CD4-positive, alpha-beta memory T cell (primary cell): ENCODE measurements at regions of chr11 and their contacts with region 1.

Region 1: DNA sequence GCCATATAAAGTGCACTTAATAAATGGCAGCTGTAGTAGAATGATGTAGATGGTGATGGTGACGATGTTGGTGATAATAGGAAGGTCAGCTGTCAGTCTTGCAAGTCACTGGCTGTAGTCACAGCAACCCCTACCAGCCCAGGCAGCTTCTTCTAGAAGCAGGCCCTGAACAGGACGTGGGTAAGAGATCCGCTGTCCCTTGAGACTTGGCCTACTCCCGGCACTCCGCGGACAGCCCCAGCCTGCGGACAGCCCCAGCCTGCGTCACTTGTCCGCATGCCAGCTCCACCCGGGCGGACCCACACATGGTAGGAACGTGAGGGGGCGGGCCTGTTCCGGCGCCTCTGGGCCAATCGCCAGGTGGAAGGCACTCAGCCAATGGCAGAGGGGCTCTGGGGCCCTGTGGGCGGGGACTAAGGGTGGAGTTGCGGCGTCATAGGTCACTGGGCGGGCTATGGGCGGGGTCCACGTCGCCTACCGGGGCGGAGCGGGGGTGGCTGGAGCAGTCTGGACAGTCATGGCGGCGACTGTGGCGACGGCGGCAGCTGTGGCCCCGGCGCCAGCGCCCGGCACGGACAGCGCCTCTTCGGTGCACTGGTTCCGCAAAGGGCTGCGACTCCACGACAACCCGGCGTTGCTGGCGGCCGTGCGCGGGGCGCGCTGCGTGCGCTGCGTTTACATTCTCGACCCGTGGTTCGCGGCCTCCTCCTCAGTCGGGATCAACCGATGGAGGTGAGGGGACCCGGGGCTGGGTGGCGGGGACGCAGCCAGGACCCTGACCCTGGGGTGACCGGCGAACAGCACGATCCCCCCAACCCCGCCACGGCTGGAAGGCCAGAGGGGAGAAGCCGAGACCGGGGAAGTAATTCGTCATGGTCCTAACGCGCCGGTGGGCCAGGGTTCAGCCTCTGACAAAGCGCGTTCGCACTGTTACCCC is at the start of gene CRY2:
- DNase-seq: peak; percentile 98
- H3K4me3 ChIP-seq: peak within 1 kb of the TSS; percentile 80 to 86
- H3K4me3 Mint-ChIP-seq: peak within 1 kb of the TSS; percentile 81 to 97 (median 87)
- H3K27ac ChIP-seq: peak within 1 kb of the TSS; percentile 96
- H3K27ac Mint-ChIP-seq: peak within 1 kb of the TSS; percentile 96 to 100 (median 97)
- H3K4me1 ChIP-seq: peaks cover 43% of the 10 kb centered on the region
- H3K4me1 Mint-ChIP-seq: peaks cover 27 to 68% (median 50%) of the 10 kb centered on the region in 4 donors
- H3K27me3 ChIP-seq: no peaks in the 10 kb centered on the region
- H3K27me3 Mint-ChIP-seq: no peaks in the 10 kb centered on the region
- total RNA-seq, gene CRY2: 66.0 to 67.4 TPM

Region 2: DNA sequence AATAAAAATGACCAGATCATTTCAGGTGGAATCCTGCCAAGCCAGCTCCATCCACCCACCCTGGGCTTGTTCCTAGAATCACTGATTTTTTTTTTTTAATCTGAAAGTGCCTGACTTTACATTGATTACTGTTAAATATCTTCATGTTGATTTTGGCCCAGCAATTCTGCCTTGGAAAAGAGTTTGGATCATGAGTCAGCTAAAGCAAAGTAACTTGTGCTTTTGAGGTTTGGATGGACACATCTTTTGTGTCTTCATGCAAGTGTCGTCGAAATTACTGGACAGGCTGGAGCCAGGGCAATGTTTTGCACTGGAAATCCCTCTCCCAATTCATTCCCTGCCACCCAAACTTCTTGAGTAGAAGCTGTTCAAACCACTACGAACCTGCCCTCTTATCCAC is 397.1 kb before region 1 on chr11:
- CTCF ChIA-PET with region 1: no interaction called
- POLR2A ChIA-PET with region 1: no interaction called
- intact Hi-C with region 1: no loop called
- DNase-seq: no peak
- H3K4me3 ChIP-seq: no peak overlapping the region
- H3K4me3 Mint-ChIP-seq: no peak overlapping the region
- H3K27ac ChIP-seq: no peak overlapping the region
- H3K27ac Mint-ChIP-seq: no peak overlapping the region
- H3K4me1 ChIP-seq: no peaks in the 10 kb centered on the region
- H3K4me1 Mint-ChIP-seq: no peaks in the 10 kb centered on the region
- H3K27me3 ChIP-seq: no peaks in the 10 kb centered on the region
- H3K27me3 Mint-ChIP-seq: peaks cover 2 to 5% of the 10 kb centered on the region in 2 donors

Region 3: GRCh38 chr11:45804761-45805304 is 42.4 kb before region 1 on chr11 and contains the start of gene SLC35C1:
- CTCF ChIA-PET with region 1: interaction called, 7 read pairs
- POLR2A ChIA-PET with region 1: interaction called, 38 read pairs
- intact Hi-C with region 1: loop called (anchors 1 kb)
- DNase-seq: peak; percentile 93 to 94 (median 93)
- H3K4me3 ChIP-seq: peak within 1 kb of the TSS; percentile 90 to 95
- H3K4me3 Mint-ChIP-seq: peak within 1 kb of the TSS; percentile 90 to 96 (median 92)
- H3K27ac ChIP-seq: peak within 1 kb of the TSS; percentile 83
- H3K27ac Mint-ChIP-seq: peak within 1 kb of the TSS; percentile 83 to 94 (median 92)
- H3K4me1 ChIP-seq: peaks cover 48% of the 10 kb centered on the region
- H3K4me1 Mint-ChIP-seq: peaks cover 30 to 64% (median 38%) of the 10 kb centered on the region in 4 donors
- H3K27me3 ChIP-seq: no peaks in the 10 kb centered on the region
- H3K27me3 Mint-ChIP-seq: no peaks in the 10 kb centered on the region
- total RNA-seq, gene SLC35C1: 20.3 to 21.5 TPM

Region 4: DNA sequence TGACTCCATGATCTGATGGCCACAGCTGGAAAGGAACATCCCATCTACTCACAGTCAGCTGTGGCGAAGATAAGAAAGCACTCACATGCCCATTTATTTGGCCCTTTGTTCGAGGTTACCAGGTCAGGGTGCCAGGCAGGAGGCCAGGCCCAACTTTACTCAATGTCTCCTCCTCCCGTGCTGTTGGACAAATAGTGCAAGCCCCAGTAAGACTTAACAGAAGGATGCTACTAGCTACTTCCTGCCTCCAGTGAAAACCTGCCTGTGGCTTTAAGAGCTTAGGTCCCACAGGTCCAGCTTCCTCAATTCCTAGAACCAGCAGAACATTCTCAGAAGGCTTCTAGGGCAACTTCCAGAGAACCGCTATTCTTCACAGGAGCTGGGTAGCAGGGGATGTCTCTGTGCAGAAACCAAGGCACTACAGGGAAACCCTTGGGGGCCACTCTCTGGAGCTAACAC is 12.9 kb before region 1 on chr11:
- CTCF ChIA-PET with region 1: interaction called, 20 read pairs
- POLR2A ChIA-PET with region 1: interaction called, 8 read pairs
- intact Hi-C with region 1: no loop called
- DNase-seq: no peak
- H3K4me3 ChIP-seq: no peak overlapping the region
- H3K4me3 Mint-ChIP-seq: peak overlapping the region in 2 of 8 donors; percentile 4 to 77
- H3K27ac ChIP-seq: no peak overlapping the region
- H3K27ac Mint-ChIP-seq: peak overlapping the region in 5 of 7 donors; percentile 8 to 86 (median 81)
- H3K4me1 ChIP-seq: peaks cover 15% of the 10 kb centered on the region
- H3K4me1 Mint-ChIP-seq: peaks cover 8 to 12% (median 11%) of the 10 kb centered on the region in 4 donors
- H3K27me3 ChIP-seq: no peaks in the 10 kb centered on the region
- H3K27me3 Mint-ChIP-seq: peaks cover 0 to 2% of the 10 kb centered on the region in 2 donors

Region 5: DNA sequence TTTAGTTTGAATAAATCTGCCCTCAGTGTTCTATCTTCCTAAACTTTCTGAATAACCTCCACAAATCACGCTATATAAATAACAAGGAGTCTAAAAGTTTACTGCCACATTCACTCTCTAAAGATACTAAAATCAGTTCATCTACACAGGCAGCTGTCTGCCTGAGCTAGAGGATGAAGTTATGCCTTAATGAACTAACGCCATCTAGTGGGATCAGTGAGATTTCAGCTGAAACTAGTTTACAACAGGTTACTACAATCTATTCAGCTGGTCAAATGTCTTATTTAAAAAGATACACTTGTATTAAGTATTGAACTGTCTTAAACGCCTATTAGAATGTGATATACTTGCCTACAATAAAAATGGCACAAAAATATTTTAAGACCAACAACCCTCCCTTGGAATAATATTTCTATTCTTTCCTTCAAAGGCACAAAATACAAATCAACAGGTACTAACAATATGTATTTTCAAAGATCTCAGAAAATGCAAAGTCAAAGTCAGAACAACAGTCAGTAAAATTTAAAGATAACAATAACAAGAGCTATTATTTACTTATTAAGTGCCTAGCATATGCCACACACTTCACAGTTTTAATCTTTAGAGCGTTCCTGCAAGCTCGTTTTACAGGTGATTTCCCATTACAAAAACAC is 159.3 kb after region 1 on chr11:
- CTCF ChIA-PET with region 1: interaction called, 34 read pairs
- POLR2A ChIA-PET with region 1: interaction called, 4 read pairs
- intact Hi-C with region 1: loop called (anchors 1 kb)
- DNase-seq: peak in 4 of 5 donors; percentile 52 to 63 (median 56)
- H3K4me3 ChIP-seq: no peak overlapping the region
- H3K4me3 Mint-ChIP-seq: no peak overlapping the region
- H3K27ac ChIP-seq: no peak overlapping the region
- H3K27ac Mint-ChIP-seq: peak overlapping the region in 3 of 7 donors; percentile 29 to 79 (median 56)
- H3K4me1 ChIP-seq: no peaks in the 10 kb centered on the region
- H3K4me1 Mint-ChIP-seq: peaks cover 0 to 4% (median 2%) of the 10 kb centered on the region in 4 donors
- H3K27me3 ChIP-seq: no peaks in the 10 kb centered on the region
- H3K27me3 Mint-ChIP-seq: no peaks in the 10 kb centered on the region

Region 6: DNA sequence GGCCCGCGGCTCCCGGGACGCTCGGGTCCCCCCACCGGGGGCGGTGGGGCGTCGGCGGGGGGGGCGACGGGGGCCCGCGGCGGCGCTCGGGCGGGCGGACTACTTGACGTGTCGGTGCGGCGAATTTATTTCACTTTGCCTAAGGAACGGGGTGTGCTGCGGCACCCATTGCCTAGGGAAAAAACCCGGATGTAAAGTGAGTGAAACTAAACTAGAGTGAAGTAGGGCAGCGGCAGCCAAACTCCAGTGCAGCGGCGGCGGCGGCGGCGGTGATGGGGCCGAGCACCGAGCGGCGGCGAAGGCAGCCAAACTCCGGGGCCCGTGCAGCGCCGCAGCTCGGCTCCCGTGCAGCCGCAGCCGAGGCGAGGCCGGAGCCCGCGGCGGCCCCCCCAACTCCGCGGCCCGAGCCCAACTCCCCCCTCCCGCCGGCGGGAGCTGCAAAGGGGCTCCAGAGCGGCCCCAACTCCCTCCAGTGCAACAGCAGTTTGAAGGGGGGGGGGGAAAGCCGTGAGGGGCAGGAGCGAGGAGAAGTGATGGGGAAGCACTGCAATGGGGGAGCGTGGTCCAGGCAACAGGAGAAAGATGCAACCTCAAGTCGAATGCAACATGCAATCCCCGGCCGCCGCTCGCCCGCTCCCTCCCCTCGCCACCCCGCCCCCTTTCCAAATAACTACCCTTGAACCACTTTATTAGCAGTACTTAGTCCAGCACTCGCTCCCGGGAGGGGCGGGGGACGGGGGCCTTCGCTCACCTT is 274.7 kb after region 1 on chr11:
- CTCF ChIA-PET with region 1: no interaction called
- POLR2A ChIA-PET with region 1: no interaction called
- intact Hi-C with region 1: loop called (anchors 10 kb)
- DNase-seq: peak; percentile 82 to 86 (median 84)
- H3K4me3 ChIP-seq: peak overlapping the region; percentile 42 to 60
- H3K4me3 Mint-ChIP-seq: peak overlapping the region; percentile 86 to 94 (median 92)
- H3K27ac ChIP-seq: peak overlapping the region; percentile 60
- H3K27ac Mint-ChIP-seq: peak overlapping the region; percentile 87 to 98 (median 94)
- H3K4me1 ChIP-seq: peaks cover 35% of the 10 kb centered on the region
- H3K4me1 Mint-ChIP-seq: peaks cover 27 to 51% (median 34%) of the 10 kb centered on the region in 4 donors
- H3K27me3 ChIP-seq: no peaks in the 10 kb centered on the region
- H3K27me3 Mint-ChIP-seq: peaks cover 0 to 3% of the 10 kb centered on the region in 2 donors